Ovary (tissue), 10 donors: ENCODE measurements at regions of chr16 and their contacts with region 1.

Region 1: DNA sequence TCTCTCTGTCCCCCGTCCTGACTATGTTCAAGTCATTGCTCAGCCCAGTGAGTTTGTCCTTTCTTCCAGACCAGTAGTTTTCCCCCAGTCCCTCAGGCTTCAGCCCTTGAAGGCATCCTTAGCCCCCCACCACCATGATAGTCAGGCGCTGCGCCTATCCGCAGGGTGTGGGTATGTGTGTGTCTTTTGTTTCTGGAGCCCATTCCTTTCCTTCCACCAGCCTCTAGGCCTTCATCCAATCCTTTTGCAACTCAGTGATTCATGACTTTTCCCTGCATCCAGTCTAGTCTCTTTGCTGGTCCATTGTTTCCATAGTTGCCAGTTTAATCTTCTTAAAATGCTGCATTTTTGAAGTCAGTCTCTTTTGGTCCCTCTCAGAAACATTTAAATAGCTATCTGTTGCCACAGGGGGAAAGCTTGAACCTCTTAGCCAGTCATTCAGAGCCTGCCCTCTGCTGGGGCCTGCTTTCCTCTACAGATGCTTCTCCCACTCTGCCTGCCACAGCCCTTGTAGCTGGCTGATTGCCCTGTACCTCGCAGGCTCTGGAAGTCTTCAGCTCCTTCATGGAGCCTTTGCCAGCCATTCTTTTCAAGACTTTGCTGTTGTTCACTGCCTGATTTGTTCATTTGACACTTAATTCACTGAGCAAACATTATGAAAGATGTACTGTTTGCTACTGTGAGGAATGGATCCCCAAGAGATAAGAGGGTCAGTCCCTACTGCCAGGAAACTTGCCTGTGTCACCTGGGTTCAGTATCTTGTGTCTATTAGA is 55.9 kb upstream of the ADCY7 start:
- DNase-seq: peak; percentile 75 to 85 (median 77)
- H3K4me3 ChIP-seq: no peak overlapping the region
- H3K27ac ChIP-seq: no peak overlapping the region
- H3K4me1 ChIP-seq: peaks cover 11% of the 10 kb centered on the region
- H3K27me3 ChIP-seq: no peaks in the 10 kb centered on the region
- CTCF ChIP-seq: peak; percentile 25 to 52 (median 48)
- EP300 ChIP-seq: no peak
- POLR2A ChIP-seq: no peak

Region 2: DNA sequence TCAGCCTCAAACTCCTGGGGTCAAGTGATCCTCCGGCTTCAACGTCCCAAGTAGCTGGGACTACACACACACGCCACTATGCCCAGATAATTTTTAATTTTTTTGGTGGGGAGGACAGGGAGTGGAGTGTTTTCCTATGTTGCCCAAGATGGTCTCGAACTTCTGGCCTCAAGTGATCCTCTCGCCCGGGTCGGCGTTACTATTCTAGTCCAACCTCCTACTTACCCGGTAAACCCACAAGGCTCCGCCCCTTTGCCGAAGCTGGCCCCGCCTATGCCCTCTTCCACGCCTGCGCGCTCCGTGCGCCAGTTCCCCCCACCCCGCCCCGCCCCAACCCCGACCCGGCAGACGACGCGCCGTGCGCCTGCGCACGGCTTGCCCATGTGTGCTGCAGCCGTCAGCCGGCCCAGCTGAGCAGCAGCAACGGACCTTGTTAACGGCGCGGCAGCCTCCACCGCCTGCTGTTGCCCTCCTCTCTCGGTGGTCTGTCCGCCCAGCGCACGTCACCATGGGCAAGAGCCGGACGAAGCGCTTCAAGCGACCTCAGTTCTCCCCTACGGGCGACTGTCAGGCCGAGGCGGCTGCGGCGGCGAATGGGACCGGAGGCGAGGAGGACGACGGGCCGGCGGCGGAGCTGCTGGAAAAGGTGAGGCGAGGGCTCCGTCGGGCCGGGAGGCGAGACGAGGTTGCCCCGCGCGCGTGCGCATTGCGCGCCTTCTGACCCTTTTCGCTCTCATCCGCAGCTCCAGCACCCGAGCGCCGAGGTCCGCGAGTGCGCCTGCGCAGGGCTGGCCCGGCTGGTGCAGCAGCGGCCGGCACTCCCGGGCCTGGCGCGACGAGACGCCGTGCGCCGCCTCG is 144.6 kb before region 1 on chr16 and contains the start of gene HEATR3:
- intact Hi-C with region 1: loop called in 1 of 4 experiments (anchors 5 kb)
- DNase-seq: peak; percentile 91 to 97 (median 94)
- H3K4me3 ChIP-seq: peak within 1 kb of the TSS; percentile 76
- H3K27ac ChIP-seq: peak within 1 kb of the TSS; percentile 84 to 90
- H3K4me1 ChIP-seq: peaks cover 1% of the 10 kb centered on the region
- H3K27me3 ChIP-seq: no peaks in the 10 kb centered on the region
- CTCF ChIP-seq: no peak
- EP300 ChIP-seq: peak; percentile 18
- POLR2A ChIP-seq: no peak
- total RNA-seq, gene HEATR3: 7.6 to 15.2 (median 10.7) TPM

Region 3: GRCh38 chr16:50079397-50080140 is 130.9 kb before region 1 on chr16:
- intact Hi-C with region 1: no loop called
- DNase-seq: no peak
- H3K4me3 ChIP-seq: no peak overlapping the region
- H3K27ac ChIP-seq: no peak overlapping the region
- H3K4me1 ChIP-seq: no peaks in the 10 kb centered on the region
- H3K27me3 ChIP-seq: no peaks in the 10 kb centered on the region
- CTCF ChIP-seq: no peak
- EP300 ChIP-seq: no peak
- POLR2A ChIP-seq: no peak

Region 4: DNA sequence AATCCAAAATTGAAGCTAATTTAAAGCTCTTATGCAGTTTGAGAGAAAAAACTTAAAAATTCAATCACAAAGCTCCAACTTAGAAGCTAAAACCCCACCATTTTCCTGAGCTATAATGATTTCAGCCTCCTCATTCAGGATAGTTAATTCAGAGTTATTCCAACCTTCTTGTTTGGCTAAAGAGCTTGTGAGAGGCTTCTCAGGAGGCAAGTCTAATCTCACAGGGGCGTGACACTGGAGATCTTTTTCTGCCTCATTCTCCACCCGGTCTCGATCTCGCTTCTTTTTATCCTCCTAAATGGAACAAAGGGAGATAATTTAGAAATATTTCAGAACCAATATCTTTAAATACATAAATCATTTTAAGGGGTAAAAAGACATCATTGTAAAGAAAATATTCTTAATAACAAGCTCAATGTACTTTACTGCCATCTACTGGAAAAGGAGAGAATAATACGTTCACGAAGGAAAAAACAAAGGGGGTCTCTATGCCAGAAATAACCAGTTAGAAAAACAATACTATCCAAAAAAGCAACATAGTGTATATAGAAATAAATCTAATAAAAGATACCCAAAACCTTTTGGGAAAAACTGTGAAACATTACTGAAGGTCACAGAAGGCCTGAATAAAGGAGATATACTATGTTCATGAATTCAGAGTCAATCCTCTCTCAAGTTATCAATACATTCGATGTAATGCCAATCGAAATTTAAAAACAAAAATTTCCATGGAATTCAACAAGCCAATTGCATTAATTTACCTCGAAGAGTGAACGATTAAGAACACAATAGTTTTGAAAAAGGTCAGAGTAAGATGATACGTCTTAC is 144.4 kb after region 1 on chr16:
- intact Hi-C with region 1: loop called (anchors 5 to 10 kb)
- DNase-seq: no peak
- H3K4me3 ChIP-seq: no peak overlapping the region
- H3K27ac ChIP-seq: no peak overlapping the region
- H3K4me1 ChIP-seq: peaks cover 2% of the 10 kb centered on the region
- H3K27me3 ChIP-seq: no peaks in the 10 kb centered on the region
- CTCF ChIP-seq: peak; percentile 12 to 59 (median 32)
- EP300 ChIP-seq: no peak
- POLR2A ChIP-seq: no peak

Region 5: GRCh38 chr16:50625374-50625773 is 414.9 kb after region 1 on chr16:
- intact Hi-C with region 1: loop called in 1 of 4 experiments (anchors 1 kb)
- DNase-seq: no peak
- H3K4me3 ChIP-seq: no peak overlapping the region
- H3K27ac ChIP-seq: no peak overlapping the region
- H3K4me1 ChIP-seq: peaks cover 2% of the 10 kb centered on the region
- H3K27me3 ChIP-seq: no peaks in the 10 kb centered on the region
- CTCF ChIP-seq: no peak
- EP300 ChIP-seq: no peak
- POLR2A ChIP-seq: no peak